Mammary epithelial cell (primary cell): ENCODE measurements at regions of chr10 and their contacts with region 1.

Region 1: DNA sequence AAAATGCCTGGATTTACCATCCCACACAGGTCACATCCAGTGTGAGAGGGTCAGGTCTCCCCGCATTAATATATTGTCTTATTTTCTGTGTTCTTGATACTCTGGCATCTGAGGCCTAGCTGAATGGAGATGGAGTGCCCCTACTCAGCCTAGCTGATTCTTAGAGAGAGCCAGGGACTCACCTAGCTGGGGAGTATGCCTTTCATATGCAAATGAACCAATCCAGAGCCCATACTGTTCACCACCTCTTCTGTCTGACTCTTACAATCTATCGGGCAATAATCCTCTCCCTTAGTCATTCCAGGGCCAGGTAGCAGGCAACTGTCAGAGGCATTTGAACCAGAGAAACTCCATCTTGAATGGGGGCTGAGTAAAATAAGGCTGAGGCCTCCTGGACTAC is 46.3 kb downstream of the LBX1 start:
- DNase-seq: no peak
- H3K4me3 ChIP-seq: no peak overlapping the region
- H3K27ac ChIP-seq: no peak overlapping the region
- H3K4me1 ChIP-seq: no peaks in the 10 kb centered on the region
- H3K27me3 ChIP-seq: no peaks in the 10 kb centered on the region
- CTCF ChIP-seq: no peak

Region 2: DNA sequence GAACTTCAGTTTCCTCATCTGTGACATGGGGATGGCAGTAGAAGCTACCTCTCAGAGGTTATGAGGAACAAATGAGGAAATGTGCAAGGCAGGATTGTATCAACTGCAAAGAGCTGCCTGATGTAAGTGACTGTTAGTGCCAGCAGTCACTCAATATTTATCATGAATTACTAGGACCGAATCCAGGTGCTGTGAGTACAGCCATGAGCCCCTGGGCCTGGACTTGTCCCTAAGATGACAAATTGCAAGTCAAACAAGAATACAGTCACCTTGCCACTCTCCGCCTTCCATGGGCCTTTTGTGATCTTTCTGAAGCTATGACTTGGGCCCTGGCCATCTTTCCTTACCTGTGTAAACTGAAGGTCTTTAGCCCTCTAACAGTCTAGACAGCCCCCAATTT is 79.5 kb before region 1 on chr10:
- CTCF ChIA-PET with region 1: no interaction called
- dilution Hi-C with region 1: loop called (anchors 5 kb)
- in situ Hi-C with region 1: no loop called
- intact Hi-C with region 1: no loop called
- DNase-seq: no peak
- H3K4me3 ChIP-seq: no peak overlapping the region
- H3K27ac ChIP-seq: no peak overlapping the region
- H3K4me1 ChIP-seq: peaks cover 12% of the 10 kb centered on the region
- H3K27me3 ChIP-seq: no peaks in the 10 kb centered on the region
- CTCF ChIP-seq: no peak

Region 3: GRCh38 chr10:101595591-101596433 is 412.9 kb after region 1 on chr10:
- CTCF ChIA-PET with region 1: no interaction called
- dilution Hi-C with region 1: no loop called
- in situ Hi-C with region 1: no loop called
- intact Hi-C with region 1: no loop called
- DNase-seq: no peak
- H3K4me3 ChIP-seq: no peak overlapping the region
- H3K27ac ChIP-seq: no peak overlapping the region
- H3K4me1 ChIP-seq: no peaks in the 10 kb centered on the region
- H3K27me3 ChIP-seq: no peaks in the 10 kb centered on the region
- CTCF ChIP-seq: no peak